CD8-positive, alpha-beta memory T cell (primary cell): ENCODE measurements at regions of chr17 and their contacts with region 1.

Region 1: DNA sequence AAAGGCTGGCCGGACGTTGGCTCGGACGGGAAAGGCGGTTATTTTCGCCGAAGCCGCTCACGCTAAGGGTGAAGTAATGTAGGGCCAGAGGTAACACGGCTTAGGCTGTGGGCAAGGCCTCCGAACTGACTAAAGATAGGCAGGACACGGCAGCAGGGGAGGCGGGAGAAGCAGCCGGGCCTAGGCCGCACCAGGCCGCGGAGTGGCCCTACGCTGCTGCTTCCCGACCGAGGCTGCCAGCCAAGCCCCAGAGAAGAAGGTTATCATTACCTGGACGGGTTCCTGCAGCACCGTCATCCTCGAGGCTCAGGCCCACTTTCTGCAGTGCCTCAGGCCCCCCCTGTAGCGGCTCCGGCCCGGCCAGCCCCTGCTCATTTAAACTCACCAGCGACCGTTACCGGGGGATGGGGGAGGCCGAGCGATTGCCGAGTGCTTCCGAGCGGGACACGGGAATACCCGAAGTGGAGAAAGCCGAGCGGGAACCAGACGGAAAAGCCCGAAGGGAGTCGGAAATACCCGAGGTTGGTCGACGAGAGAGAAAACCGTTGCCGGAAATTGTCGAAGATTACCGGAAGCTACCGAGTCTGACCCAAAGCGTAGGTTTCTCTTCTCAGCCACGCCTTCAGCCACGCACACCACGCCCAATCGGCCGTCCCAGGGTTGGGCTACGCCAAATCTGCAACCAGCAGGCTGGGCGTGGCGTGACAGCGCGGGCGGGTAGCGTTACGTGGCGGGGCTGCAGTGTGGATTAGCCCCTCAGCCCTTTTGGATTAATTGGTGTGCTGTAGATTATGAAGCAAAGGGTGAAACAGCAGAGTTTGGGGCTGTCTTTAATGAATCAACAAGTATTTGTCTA is at the start of gene CDC27:
- DNase-seq: peak; percentile 99 to 100 (median 100)
- H3K4me3 ChIP-seq: peak within 1 kb of the TSS; percentile 87
- H3K4me3 Mint-ChIP-seq: peak within 1 kb of the TSS; percentile 92 to 99 (median 94)
- H3K27ac ChIP-seq: peak within 1 kb of the TSS; percentile 95
- H3K27ac Mint-ChIP-seq: peak within 1 kb of the TSS; percentile 78 to 99 (median 96)
- H3K4me1 ChIP-seq: peaks cover 34% of the 10 kb centered on the region
- H3K4me1 Mint-ChIP-seq: peaks cover 60 to 73% (median 62%) of the 10 kb centered on the region in 3 donors
- H3K27me3 ChIP-seq: no peaks in the 10 kb centered on the region
- H3K27me3 Mint-ChIP-seq: peaks cover 0 to 2% of the 10 kb centered on the region in 2 donors
- total RNA-seq, gene CDC27: 113 to 116 TPM

Region 2: DNA sequence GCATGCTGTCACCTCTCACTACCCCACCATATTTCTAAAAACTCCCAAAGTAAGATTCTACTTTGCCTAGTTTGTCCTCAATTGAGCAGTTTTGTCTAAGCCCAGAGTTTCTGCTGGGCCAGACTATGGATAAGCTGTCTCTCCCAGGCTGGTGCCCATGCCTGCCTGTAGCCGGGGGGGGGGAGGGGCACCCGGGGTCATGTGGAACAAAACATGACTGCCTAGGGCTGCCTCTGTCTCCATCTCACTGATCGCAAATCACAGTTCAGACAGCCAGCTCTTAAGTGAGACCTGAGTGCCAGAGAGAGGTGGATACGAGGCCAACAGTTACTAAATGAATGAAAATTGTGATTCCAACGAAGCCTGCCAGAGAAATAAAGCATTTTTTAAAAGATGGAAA is 131.3 kb before region 1 on chr17:
- CTCF ChIA-PET with region 1: no interaction called
- POLR2A ChIA-PET with region 1: no interaction called
- DNase-seq: no peak
- H3K4me3 ChIP-seq: no peak overlapping the region
- H3K4me3 Mint-ChIP-seq: no peak overlapping the region
- H3K27ac ChIP-seq: no peak overlapping the region
- H3K27ac Mint-ChIP-seq: no peak overlapping the region
- H3K4me1 ChIP-seq: no peaks in the 10 kb centered on the region
- H3K4me1 Mint-ChIP-seq: peaks cover 0 to 5% (median 3%) of the 10 kb centered on the region in 3 donors
- H3K27me3 ChIP-seq: no peaks in the 10 kb centered on the region
- H3K27me3 Mint-ChIP-seq: no peaks in the 10 kb centered on the region

Region 3: DNA sequence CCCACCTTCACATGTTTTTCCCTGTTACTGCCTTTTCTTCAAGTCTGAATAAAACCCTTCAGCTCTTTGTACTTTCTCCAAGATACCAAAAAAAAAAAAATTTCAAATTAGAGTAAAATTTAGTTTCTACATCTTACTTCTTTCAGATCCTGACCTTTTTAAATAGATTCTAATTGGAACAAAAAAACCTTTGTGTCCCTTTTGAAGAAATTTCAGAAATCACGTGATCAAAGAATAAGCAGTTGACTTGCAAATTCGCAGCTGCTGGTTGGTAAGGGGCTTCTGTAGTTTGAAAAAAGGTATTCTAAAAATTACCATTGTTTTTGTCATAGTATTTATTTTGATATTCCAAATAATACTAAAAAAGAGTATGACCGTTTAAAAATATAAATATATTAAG is 71.7 kb before region 1 on chr17:
- CTCF ChIA-PET with region 1: no interaction called
- POLR2A ChIA-PET with region 1: no interaction called
- DNase-seq: no peak
- H3K4me3 ChIP-seq: no peak overlapping the region
- H3K4me3 Mint-ChIP-seq: no peak overlapping the region
- H3K27ac ChIP-seq: no peak overlapping the region
- H3K27ac Mint-ChIP-seq: no peak overlapping the region
- H3K4me1 ChIP-seq: no peaks in the 10 kb centered on the region
- H3K4me1 Mint-ChIP-seq: no peaks in the 10 kb centered on the region
- H3K27me3 ChIP-seq: no peaks in the 10 kb centered on the region
- H3K27me3 Mint-ChIP-seq: no peaks in the 10 kb centered on the region

Region 4: DNA sequence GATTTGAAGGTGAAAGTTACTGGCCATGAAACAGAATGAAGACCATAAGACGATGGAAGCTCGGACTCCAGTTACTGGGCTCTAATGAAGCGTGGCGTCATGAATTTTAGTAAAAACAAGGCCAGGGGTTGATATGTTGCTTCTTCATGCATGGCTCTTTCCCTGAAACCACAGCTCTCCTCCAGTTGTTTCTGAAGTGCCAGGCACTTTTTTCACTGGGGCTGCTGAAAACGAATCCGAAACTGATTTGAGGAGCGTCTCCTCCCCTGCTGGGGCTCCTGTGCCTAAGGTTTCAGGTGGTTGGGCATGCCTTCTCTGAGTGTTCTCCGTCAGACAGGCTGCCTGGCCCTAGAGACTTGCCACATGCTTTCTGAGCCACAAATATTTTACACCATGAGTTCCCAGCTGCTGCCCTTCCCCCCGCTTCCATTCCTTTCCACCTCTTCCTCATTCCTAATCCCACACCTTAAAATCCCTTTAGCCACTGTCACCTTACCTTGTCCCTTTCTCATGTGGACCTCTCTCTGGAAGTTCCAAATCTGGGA is 16.4 kb after region 1 on chr17:
- CTCF ChIA-PET with region 1: interaction called, 5 read pairs
- POLR2A ChIA-PET with region 1: interaction called, 11 read pairs
- DNase-seq: peak; percentile 51 to 81 (median 67)
- H3K4me3 ChIP-seq: peak overlapping the region; percentile 45
- H3K4me3 Mint-ChIP-seq: peak overlapping the region; percentile 65 to 93 (median 84)
- H3K27ac ChIP-seq: peak overlapping the region; percentile 77
- H3K27ac Mint-ChIP-seq: peak overlapping the region; percentile 88 to 98 (median 96)
- H3K4me1 ChIP-seq: peaks cover 39% of the 10 kb centered on the region
- H3K4me1 Mint-ChIP-seq: peaks cover 50 to 57% (median 51%) of the 10 kb centered on the region in 3 donors
- H3K27me3 ChIP-seq: no peaks in the 10 kb centered on the region
- H3K27me3 Mint-ChIP-seq: peaks cover 0 to 2% of the 10 kb centered on the region in 2 donors